Caco-2 (cell line): ENCODE measurements at regions of chr3 and their contacts with region 1.

Region 1: DNA sequence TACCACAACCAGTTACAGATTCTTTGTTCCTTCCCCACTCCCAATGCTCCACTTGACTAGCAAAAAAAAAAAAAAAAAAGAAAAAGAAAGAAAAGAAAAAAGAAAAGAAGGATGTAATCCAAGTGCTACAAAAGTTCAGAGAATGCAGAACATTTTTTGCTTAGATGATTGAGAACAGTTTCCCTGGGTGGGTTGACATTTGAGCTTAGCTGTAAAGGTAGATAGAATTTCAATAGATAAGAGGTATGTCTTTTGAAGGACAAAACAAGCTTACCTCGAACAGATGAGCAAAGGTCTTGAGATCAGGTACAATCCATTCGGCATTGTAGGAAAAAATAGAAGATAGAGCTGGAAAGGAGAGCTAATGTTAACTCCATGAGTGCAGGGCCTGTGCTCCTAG is 344.6 kb upstream of the NECTIN3 start:
- DNase-seq: peak in 1 of 2 experiments; percentile 7
- H3K4me3 ChIP-seq: no peak overlapping the region
- H3K4me3 Mint-ChIP-seq: peak overlapping the region; percentile 28
- H3K27ac Mint-ChIP-seq: peak overlapping the region; percentile 84
- H3K4me1 ChIP-seq: peaks cover 22% of the 10 kb centered on the region
- H3K4me1 Mint-ChIP-seq: peaks cover 28% of the 10 kb centered on the region
- H3K27me3 ChIP-seq: no peaks in the 10 kb centered on the region
- H3K27me3 Mint-ChIP-seq: no peaks in the 10 kb centered on the region
- CTCF ChIP-seq: no peak

Region 2: GRCh38 chr3:110656394-110657025 is 70.5 kb before region 1 on chr3:
- CTCF ChIA-PET with region 1: no interaction called
- POLR2A ChIA-PET with region 1: no interaction called
- intact Hi-C with region 1: loop called (anchors 10 kb)
- DNase-seq: no peak
- H3K4me3 ChIP-seq: no peak overlapping the region
- H3K4me3 Mint-ChIP-seq: no peak overlapping the region
- H3K27ac Mint-ChIP-seq: no peak overlapping the region
- H3K4me1 ChIP-seq: peaks cover 38% of the 10 kb centered on the region
- H3K4me1 Mint-ChIP-seq: peaks cover 20% of the 10 kb centered on the region
- H3K27me3 ChIP-seq: no peaks in the 10 kb centered on the region
- H3K27me3 Mint-ChIP-seq: no peaks in the 10 kb centered on the region
- CTCF ChIP-seq: no peak